ENCODE measurements at regions of chr5 and their contacts with region 1.

Region 1: DNA sequence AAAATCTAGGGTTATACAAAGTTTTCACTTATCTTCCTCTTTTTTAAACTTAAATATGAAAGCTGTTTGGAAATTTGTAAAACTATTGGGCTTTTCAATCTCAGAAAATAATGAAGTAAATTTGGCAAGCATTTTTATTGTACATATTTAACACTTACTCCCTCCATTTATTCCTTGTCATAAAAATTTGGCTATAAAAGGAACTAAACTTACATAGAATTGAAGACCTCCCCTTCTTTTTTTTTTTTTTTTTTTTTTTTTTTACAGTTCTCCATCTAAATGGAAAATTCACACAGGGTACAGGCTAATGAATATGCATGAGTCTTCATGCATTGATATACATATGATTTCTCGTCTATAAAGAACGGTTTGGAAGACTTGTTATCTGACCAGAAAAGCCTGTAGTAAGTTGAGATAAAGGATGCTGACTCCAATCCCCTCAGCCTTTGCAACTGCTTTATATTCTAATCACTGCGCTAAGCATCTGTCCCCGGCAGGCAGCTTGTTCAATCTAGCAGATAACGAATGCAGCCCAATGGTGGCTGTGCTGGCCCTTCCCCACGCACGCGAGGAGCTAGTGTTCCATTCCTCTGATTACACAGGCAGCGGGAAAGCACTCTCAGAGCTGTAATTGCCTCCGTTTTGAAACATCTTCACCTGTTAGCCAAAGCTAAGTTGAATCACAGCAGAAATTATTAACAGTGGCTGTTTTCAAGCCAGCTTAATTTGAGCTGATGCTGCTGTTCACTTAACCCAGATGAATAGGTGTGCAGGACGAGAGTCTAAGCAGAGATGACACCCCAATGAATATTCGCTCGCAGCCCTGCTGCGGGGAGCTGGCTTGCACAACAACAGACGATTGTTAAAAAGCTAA is 453.8 kb upstream of the ZNF608 start:
- DNase-seq: no peak
- ATAC-seq: peak; percentile 70
- H3K4me3 ChIP-seq: peak overlapping the region; percentile 33 to 53
- H3K27ac ChIP-seq: peak overlapping the region; percentile 81
- H3K4me1 ChIP-seq: peaks cover 17% of the 10 kb centered on the region
- H3K27me3 ChIP-seq: no peaks in the 10 kb centered on the region
- CTCF ChIP-seq: no peak

Region 2: GRCh38 chr5:123628860-123629556 is 1571.2 kb before region 1 on chr5:
- CTCF ChIA-PET with region 1: no interaction called
- POLR2A ChIA-PET with region 1: interaction called, 16 read pairs
- in situ Hi-C with region 1: no loop called
- intact Hi-C with region 1: no loop called
- DNase-seq: no peak
- ATAC-seq: no peak; the same call in 1 of the 2 replicates
- H3K4me3 ChIP-seq: no peak overlapping the region
- H3K27ac ChIP-seq: no peak overlapping the region
- H3K4me1 ChIP-seq: no peaks in the 10 kb centered on the region
- H3K27me3 ChIP-seq: no peaks in the 10 kb centered on the region
- CTCF ChIP-seq: no peak